PC-9 (cell line): ENCODE measurements at regions of chr15 and their contacts with region 1.

Region 1: GRCh38 chr15:76866716-76867321 is 38.3 kb downstream of the SCAPER start:
- DNase-seq: peak; percentile 2 to 37
- H3K4me3 ChIP-seq: no peak overlapping the region
- H3K27ac ChIP-seq: no peak overlapping the region
- H3K4me1 ChIP-seq: no peaks in the 10 kb centered on the region
- H3K27me3 ChIP-seq: no peaks in the 10 kb centered on the region
- CTCF ChIP-seq: peak; percentile 75

Region 2: DNA sequence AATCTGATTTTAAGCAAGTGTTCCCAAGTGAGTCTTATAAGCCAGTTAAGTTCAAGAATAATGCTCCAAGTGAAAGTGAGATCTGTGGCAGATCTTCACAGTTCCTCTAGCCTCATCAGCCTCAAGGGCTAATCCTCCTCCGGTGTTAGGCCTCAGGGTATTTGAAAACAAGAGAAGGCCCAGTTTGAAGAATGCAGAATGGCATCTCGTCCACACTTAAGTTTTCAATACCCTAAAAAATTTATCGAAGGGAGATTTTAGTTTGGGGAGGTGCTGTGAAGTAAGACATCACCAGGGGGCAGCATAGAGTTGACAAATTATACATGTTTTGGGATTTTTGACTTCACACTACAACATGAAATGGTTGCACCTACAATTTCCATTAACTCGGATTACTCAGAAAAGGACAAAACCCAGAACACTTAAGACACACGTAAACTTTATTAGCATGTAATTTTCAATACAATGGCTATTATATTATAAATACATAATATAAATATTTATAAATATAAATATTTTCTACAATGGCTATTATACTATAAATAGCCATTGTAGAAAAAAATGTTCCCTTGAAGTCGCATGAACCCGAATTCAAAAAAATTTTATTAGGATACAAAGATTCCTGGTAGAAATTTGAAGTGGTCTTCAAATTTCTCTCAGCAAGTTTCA is 809.4 kb before region 1 on chr15:
- CTCF ChIA-PET with region 1: no interaction called
- POLR2A ChIA-PET with region 1: no interaction called
- intact Hi-C with region 1: loop called (anchors 10 kb)
- DNase-seq: peak; percentile 15 to 43
- H3K4me3 ChIP-seq: peak overlapping the region; percentile 27; the same call in 1 of the 2 replicates
- H3K27ac ChIP-seq: no peak overlapping the region
- H3K4me1 ChIP-seq: peaks cover 16% of the 10 kb centered on the region
- H3K27me3 ChIP-seq: peaks cover 21% of the 10 kb centered on the region; the same call in 1 of the 2 replicates
- CTCF ChIP-seq: peak; percentile 89

Region 3: DNA sequence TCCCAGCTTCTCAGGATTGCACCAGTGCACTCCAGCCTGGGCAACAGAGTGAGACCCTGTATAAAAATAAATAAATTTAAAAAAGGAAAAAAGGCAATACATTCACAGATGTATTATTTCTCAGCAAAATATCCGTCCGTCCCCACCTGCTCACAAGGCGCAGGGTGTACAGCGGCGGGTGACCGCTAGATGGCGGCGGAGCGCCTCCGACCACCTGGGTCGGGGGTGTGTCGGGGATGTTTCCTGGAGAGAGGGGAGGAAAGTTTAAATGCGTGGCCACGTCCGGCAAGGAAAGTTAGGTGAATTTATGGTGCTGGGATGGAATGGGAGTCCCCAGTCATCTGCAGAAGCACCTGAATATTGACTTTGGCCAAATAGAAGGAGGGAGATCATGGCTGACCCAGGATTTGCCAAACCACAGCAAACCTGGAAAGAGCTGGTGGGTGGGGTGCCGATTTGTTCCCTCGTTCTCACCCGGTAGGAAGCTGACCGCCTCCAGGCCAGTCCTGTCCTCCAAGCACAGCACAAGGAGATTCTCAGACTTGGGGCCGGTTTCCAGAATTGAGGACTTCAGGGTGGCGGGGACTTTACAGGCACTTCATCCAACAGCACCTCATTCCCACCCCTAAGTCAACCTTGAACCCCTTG is 718.8 kb before region 1 on chr15:
- CTCF ChIA-PET with region 1: no interaction called
- POLR2A ChIA-PET with region 1: no interaction called
- intact Hi-C with region 1: loop called (anchors 1 kb)
- DNase-seq: peak in 1 of 2 experiments; percentile 71
- H3K4me3 ChIP-seq: peak overlapping the region; percentile 35; the same call in 1 of the 2 replicates
- H3K27ac ChIP-seq: no peak overlapping the region
- H3K4me1 ChIP-seq: peaks cover 11% of the 10 kb centered on the region
- H3K27me3 ChIP-seq: peaks cover 34% of the 10 kb centered on the region
- CTCF ChIP-seq: peak; percentile 96

Region 4: GRCh38 chr15:76235186-76235826 is 631.5 kb before region 1 on chr15:
- CTCF ChIA-PET with region 1: no interaction called
- POLR2A ChIA-PET with region 1: no interaction called
- intact Hi-C with region 1: loop called (anchors 5 kb)
- DNase-seq: no peak
- H3K4me3 ChIP-seq: no peak overlapping the region
- H3K27ac ChIP-seq: no peak overlapping the region
- H3K4me1 ChIP-seq: no peaks in the 10 kb centered on the region
- H3K27me3 ChIP-seq: no peaks in the 10 kb centered on the region
- CTCF ChIP-seq: peak; percentile 68

Region 5: DNA sequence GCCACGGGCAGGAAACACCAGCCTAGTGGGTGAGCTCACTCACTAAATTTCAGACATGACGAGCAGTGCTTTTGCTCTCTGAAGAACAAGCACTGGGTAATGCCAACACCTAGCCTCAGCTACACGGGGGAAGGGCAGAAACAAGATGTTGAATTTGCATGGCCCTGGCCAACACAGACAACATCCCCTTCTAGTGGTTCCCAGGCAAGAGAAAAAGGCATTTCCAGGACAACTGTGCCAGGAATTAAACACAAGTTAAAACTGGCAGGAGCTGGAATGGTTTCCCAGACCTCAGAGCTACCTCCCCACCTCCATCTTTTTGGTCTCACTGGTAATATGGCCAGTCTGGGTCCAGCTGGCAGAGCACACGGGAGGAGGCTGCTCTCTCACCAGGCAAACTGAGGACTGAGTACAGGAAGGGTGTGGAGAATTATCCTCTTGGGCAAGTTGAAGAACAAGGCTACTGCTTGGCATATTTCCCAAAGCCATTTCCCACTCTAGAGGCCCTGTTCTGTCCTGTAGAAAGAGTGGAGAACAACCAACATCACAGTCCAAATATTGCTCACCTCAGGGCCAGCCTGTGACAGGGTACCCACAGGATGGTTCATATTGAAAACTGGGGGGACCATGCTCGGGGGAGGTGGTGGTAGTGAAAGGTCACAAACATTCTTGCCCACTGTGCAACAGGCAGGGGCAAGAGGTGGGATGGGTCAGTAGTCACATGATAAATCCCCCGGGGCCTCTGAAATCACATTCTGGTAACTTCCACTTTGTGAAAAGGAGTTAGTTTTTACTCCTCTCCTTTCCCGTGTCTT is 177.6 kb after region 1 on chr15:
- CTCF ChIA-PET with region 1: no interaction called
- POLR2A ChIA-PET with region 1: no interaction called
- intact Hi-C with region 1: no loop called
- DNase-seq: no peak
- H3K4me3 ChIP-seq: no peak overlapping the region
- H3K27ac ChIP-seq: no peak overlapping the region
- H3K4me1 ChIP-seq: no peaks in the 10 kb centered on the region
- H3K27me3 ChIP-seq: no peaks in the 10 kb centered on the region
- CTCF ChIP-seq: no peak

Region 6: GRCh38 chr15:78840661-78841375 is 1974.0 kb after region 1 on chr15:
- CTCF ChIA-PET with region 1: no interaction called
- POLR2A ChIA-PET with region 1: no interaction called
- intact Hi-C with region 1: no loop called
- DNase-seq: peak in 1 of 2 experiments; percentile 12
- H3K4me3 ChIP-seq: no peak overlapping the region
- H3K27ac ChIP-seq: no peak overlapping the region
- H3K4me1 ChIP-seq: no peaks in the 10 kb centered on the region
- H3K27me3 ChIP-seq: 0 out of 2 replicates have a peak, but pooled peaks cover 3% of the 10 kb centered on the region
- CTCF ChIP-seq: no peak